Left colon (tissue), 2 donors: ENCODE measurements at regions of chr22 and their contacts with region 1.

Region 1: DNA sequence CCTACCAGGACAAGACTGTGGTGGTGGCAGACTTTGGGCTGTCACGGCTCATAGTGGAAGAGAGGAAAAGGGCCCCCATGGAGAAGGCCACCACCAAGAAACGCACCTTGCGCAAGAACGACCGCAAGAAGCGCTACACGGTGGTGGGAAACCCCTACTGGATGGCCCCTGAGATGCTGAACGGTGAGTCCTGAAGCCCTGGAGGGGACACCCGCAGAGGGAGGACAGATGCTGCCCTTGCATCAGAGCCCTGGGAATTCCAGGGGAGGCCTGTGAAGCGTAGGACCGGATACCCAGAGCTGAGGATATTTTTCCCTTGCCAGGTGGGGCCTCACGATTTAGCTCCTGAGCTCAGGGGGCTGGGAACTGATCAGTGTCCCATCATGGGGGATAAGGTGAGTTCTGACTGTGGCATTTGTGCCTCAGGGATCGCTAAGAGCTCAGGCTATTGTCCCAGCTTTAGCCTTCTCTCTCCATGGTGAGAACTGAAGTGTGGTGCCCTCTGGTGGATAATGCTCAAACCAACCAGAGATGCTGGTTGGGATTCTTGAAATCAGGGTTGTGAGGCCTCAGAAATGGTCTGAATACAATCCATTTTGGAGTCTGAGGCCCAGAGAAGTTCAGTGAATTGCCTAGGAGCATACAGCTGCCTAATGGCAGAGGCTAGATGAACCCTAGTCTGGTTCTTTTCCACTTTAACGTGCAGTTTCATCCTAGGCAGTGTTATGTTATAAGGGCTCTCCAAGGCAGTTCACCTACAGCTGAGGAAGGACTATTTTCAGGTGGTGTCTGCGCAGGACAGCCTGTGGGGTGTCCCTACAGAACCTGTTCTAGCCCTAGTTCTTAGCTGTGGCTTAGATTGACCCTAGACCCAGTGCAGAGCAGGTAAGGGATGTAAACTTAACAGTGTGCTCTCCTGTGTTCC is 19.5 kb downstream of the PIK3IP1 start:
- DNase-seq: peak in 1 of 2 donors; percentile 48
- ATAC-seq: peak; percentile 52

Region 2: GRCh38 chr22:30667494-30668385 is 605.0 kb before region 1 on chr22 and contains the start of gene DUSP18:
- intact Hi-C with region 1: no loop called
- DNase-seq: peak; percentile 94 to 97
- ATAC-seq: peak; percentile 86
- total RNA-seq, gene DUSP18: 15.3 to 18.1 TPM

Region 3: DNA sequence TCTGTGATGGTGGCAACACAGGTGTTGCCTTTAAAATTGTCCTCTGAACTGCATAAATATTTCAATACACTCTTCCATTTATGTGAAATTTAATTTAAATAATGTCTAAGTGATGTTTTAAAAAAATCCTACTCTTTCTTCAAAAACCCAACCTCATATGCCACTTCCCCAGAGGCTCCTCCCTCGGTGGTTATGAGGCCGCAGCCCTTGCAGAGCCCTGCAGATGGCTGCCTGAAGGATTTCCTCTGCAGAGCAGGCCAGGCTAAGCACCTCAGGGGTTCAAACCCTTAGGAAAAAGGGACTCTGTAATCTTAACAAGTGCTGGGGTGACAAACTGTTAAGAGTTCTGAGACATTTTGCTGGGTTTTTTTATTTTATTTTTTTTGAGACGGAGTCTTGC is 329.4 kb before region 1 on chr22:
- intact Hi-C with region 1: no loop called
- DNase-seq: no peak
- ATAC-seq: no peak

Region 4: DNA sequence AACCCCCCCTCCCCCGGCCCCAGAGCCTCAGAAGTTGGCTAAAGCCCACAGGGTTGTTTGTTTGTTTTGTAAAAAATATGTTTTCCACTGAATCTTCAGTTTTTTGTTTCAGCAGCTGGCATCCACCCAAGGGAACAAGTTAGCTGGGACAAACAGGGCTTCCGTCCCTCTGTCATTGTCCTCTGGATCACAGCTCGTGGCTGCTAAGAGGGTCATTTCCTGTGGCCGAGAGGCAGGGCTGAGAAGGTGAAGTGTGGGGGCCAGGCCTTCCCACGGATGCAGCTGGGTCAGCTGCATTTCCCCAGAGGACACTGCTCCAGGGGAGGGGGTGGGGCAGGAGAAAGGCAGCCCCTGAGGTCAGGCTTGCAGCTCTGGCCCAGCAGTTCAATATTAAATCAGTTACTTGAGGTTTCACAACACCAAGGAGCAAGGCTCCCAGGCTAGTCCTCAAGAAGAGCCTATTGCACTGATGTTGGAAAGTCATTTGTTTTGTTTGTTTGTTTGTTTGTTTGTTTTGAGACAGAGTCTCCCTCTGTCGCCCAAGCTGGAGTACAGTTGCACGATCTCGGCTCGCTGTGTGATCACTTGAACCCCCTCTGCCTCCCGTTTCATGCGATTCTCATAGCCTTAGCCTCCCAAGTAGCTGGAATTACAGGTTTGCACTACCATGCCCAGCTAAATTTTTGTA is 226.1 kb before region 1 on chr22:
- intact Hi-C with region 1: no loop called
- DNase-seq: peak; percentile 8 to 36
- ATAC-seq: no peak

Region 5: GRCh38 chr22:31211862-31212730 is 60.7 kb before region 1 on chr22 and contains the start of gene LIMK2:
- intact Hi-C with region 1: loop called in 1 of 2 experiments (anchors 10 kb)
- DNase-seq: peak; percentile 96 to 100
- ATAC-seq: peak; percentile 83
- total RNA-seq, gene LIMK2: 102 to 142 TPM

Region 6: GRCh38 chr22:31477329-31477728 is 204.5 kb after region 1 on chr22:
- intact Hi-C with region 1: no loop called
- DNase-seq: no peak
- ATAC-seq: peak; percentile 92